ENCODE measurements at regions of chr3 and their contacts with region 1.

Region 1: DNA sequence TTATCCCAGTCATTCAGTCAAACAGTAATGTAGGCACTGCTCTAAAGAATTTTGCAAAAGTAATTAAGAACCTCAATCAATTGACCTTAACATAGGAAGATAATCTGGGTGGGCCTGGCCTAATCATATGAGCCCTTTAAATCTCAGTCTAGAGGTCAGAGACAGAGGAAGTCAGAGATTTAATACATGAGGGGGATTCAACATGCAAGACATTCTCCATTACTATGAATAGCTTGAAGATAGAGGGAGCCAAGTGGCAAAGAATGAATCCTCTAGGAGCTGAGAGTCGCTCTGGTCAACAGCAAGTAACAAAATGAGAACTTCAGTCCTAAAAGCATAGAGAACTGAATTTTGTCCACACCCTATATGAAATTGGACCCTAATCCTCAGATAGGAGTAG is 39.0 kb upstream of the MBNL1 start:
- DNase-seq: no peak
- ATAC-seq: peak in 1 of 2 donors; percentile 45
- H3K4me3 ChIP-seq: no peak overlapping the region
- H3K27ac ChIP-seq: no peak overlapping the region
- H3K4me1 ChIP-seq: no peaks in the 10 kb centered on the region
- H3K27me3 ChIP-seq: no peaks in the 10 kb centered on the region
- CTCF ChIP-seq: peak in 4 of 5 experiments; percentile 22 to 49 (median 34)
- POLR2A ChIP-seq: no peak

Region 2: DNA sequence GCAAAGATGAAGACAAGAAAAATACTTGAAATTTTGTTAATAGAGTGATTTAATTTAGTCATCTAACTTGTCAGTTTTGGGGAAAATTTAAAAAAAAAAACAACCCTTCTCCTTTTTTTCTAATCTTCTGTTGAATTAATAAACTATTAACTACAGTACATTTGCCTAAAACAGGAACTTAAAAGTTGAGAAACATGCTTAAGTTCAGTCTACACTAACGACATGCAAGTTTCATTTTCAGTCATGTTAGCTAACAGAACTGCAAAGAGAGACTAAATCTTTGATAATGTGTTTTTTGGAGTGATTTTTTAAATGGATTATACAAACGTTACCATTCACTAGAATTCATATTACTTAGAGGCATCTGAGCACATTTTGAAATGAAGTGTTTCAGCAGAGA is 32.9 kb before region 1 on chr3:
- in situ Hi-C with region 1: no loop called
- intact Hi-C with region 1: loop called (anchors 5 kb)
- DNase-seq: no peak
- ATAC-seq: no peak
- H3K4me3 ChIP-seq: peak overlapping the region in 3 of 4 donors; percentile 4 to 37 (median 7)
- H3K27ac ChIP-seq: peak overlapping the region in 3 of 4 donors; percentile 77 to 84 (median 80)
- H3K4me1 ChIP-seq: peaks cover 35 to 36% of the 10 kb centered on the region in 2 donors
- H3K27me3 ChIP-seq: no peaks in the 10 kb centered on the region
- CTCF ChIP-seq: no peak
- POLR2A ChIP-seq: no peak

Region 3: DNA sequence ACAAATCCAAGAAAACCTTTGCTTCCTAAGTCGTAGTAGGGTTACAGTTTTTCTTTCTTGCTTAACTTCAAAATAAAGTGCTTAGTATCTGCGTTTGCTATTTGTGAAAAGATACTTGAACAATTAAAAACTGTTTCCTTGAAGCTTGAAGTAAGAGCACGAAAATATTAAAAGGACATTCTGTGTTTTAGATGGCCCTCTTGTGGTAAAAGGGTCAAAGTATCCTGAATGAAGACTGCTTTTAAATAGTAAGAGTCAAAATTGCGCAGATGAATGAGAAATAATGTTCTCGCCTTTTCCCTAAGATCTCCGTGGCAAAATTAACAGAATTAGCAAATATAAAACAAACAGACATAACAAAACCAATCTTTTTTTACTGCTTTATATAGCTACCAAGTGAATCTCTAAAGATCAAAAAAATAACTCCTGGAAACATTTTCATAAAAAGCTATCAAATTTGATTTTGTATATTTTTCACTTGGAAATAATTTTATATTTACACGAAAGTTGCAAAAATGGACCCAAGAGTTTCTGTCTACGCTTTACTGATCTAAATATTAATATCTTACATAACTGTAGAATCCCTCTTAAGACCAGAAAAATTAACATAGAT is 214.4 kb after region 1 on chr3:
- in situ Hi-C with region 1: no loop called
- intact Hi-C with region 1: loop called (anchors 5 kb)
- DNase-seq: no peak
- ATAC-seq: peak; percentile 51 to 56
- H3K4me3 ChIP-seq: peak overlapping the region in 1 of 4 donors; percentile 19
- H3K27ac ChIP-seq: peak overlapping the region; percentile 53 to 71 (median 62)
- H3K4me1 ChIP-seq: peaks cover 70 to 72% of the 10 kb centered on the region in 2 donors
- H3K27me3 ChIP-seq: no peaks in the 10 kb centered on the region
- CTCF ChIP-seq: peak; percentile 59 to 82 (median 68)
- POLR2A ChIP-seq: no peak

Region 4: DNA sequence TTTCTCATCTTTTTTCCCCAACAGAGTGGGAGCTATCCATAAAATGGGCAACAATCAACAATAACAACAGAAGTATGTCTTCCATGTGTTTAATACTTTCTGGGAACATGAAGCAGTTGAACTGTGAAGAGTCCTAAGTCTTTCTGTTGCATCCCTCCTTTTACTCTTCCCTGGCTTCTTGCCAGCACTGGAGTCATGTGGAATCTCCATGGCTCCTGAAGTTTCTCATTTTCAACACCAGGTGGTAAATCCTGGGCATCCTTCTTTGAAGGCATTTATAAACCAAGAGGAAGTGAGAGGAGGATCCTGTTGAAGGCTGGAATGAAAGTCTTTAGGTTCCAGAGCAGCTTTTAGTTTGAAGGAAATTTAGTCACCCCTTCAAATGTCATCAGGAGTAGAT is 565.0 kb after region 1 on chr3:
- in situ Hi-C with region 1: no loop called
- intact Hi-C with region 1: no loop called
- DNase-seq: no peak
- ATAC-seq: no peak
- H3K4me3 ChIP-seq: no peak overlapping the region
- H3K27ac ChIP-seq: no peak overlapping the region
- H3K4me1 ChIP-seq: no peaks in the 10 kb centered on the region
- H3K27me3 ChIP-seq: no peaks in the 10 kb centered on the region
- CTCF ChIP-seq: no peak
- POLR2A ChIP-seq: no peak